Right lobe of liver (tissue), 6 donors: ENCODE measurements at regions of chr21 and their contacts with region 1.

Region 1: GRCh38 chr21:43805275-43805800 is 16.0 kb downstream of the RRP1 start:
- DNase-seq: no peak
- ATAC-seq: no peak
- H3K4me3 ChIP-seq: no peak overlapping the region
- H3K27ac ChIP-seq: no peak overlapping the region
- H3K4me1 ChIP-seq: peaks cover 0 to 12% (median 0%) of the 10 kb centered on the region in 4 donors
- H3K27me3 ChIP-seq: no peaks in the 10 kb centered on the region
- CTCF ChIP-seq: no peak
- POLR2A ChIP-seq: no peak

Region 2: DNA sequence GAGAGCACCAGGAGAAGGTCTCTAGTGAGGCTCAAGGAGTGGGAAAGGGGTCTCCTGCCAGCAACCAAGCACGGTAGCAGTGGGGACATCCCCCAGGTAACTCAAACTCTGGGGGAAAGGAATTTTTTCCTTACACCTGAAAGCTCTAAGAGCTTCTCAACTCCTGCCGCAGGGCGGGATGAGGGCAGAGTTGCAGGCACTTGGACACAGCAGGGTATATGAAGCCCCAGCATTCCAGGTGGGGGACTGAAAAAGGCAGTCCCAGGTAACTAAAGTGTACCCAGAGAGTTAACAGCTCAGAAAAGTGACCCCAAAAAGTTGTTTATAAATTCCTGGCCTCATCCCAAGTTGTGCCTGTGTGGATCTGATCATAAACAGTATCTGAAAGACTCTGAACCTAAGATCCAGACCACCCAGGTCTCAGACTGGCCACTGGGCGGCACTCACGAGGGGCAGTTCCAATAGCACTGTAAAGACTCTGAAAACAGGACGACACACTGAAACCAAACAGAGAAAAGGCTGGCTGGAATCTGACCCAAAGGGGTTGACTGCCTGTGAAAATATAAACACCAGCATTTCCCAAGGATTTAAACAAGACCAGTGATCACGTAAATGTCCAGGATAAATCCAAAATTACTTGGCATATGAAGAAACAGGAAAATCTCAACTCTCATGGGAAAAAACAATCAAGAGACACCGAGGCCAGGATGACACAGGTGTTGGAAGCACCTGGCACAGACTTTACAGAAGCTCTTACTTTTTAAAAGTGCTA is 193.6 kb before region 1 on chr21:
- intact Hi-C with region 1: no loop called
- DNase-seq: peak; percentile 67 to 77 (median 76)
- ATAC-seq: peak; percentile 85 to 93 (median 88)
- H3K4me3 ChIP-seq: no peak overlapping the region
- H3K27ac ChIP-seq: peak overlapping the region in 2 of 3 donors; percentile 17 to 56
- H3K4me1 ChIP-seq: peaks cover 0 to 36% (median 10%) of the 10 kb centered on the region in 4 donors
- H3K27me3 ChIP-seq: no peaks in the 10 kb centered on the region
- CTCF ChIP-seq: peak; percentile 69 to 83 (median 78)
- POLR2A ChIP-seq: no peak

Region 3: DNA sequence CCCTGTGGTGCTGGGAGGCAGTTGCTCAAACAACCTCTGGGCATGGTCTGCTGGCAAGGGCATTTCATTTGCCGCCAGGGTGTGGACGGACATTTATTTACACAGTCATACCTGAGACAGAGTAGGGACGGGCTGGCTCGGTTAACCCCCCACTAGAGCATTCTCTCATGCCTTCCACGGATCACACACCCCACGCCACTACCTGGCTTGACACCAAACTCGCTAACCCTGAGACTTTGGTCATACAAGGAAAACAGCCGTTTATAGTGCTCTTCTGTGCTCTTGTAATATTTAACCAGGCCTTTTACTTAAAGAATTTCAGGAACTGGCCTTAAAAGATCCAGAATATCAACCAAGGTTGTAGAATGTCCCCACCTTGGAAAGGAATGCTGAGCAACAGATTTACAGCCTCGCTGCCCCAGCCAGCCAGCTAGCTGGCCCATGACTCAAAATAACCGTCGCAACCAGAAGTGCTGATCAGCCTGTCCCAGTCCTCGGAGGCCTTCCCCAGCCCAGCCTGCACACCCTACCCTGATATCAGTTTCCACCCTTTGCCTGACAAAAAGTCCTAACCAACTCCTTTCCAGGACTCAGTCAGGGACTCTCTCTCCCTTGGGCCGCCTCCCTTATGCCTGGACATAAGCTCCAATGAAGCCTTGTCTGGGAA is 92.9 kb before region 1 on chr21:
- intact Hi-C with region 1: no loop called
- DNase-seq: no peak
- ATAC-seq: peak; percentile 53 to 73 (median 58)
- H3K4me3 ChIP-seq: no peak overlapping the region
- H3K27ac ChIP-seq: no peak overlapping the region
- H3K4me1 ChIP-seq: peaks cover 0 to 6% (median 0%) of the 10 kb centered on the region in 4 donors
- H3K27me3 ChIP-seq: no peaks in the 10 kb centered on the region
- CTCF ChIP-seq: no peak
- POLR2A ChIP-seq: no peak

Region 4: DNA sequence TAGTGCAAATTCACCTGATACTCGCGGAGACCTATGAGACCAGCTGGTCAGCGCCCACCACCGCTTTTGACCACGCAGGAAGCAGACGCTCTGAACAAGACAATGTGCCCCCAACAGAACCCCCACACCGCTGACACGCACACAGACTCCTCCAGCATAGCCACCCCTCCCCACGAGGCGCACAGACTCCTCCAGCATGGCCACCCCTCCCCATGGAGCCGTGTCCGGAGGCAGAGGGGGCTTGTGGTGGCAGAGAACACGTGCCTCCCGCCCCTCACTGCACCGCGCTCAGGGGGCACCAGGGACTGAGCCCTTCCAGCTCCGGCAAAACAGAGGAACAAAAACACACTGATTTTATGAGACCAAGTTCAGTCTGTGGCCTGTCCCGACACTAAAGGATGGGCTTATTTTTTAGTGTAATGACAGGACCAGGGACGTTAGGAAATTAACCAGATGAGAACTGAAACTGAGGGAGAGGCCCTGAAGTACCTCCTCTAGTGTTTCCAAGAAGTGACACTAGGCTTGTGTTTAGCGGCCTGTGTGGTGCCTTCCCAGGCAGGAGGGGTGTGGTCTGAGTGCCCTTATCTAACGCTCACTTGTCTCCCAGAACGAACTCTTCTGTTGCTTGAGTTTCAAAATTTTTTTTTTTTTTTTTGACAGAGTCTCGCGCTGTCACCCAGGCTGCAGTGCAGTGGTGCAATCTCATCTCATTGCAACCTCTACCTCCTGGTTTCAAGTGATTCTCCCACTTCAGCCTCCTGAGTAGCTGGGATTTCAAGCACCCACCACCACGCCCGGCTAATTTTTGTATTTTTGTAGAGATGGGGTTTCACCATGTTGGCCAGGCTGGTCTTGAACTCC is 49.7 kb after region 1 on chr21:
- intact Hi-C with region 1: no loop called
- DNase-seq: peak in 1 of 3 donors; percentile 45
- ATAC-seq: peak; percentile 57 to 84 (median 68)
- H3K4me3 ChIP-seq: no peak overlapping the region
- H3K27ac ChIP-seq: no peak overlapping the region
- H3K4me1 ChIP-seq: no peaks in the 10 kb centered on the region
- H3K27me3 ChIP-seq: no peaks in the 10 kb centered on the region
- CTCF ChIP-seq: no peak
- POLR2A ChIP-seq: no peak

Region 5: DNA sequence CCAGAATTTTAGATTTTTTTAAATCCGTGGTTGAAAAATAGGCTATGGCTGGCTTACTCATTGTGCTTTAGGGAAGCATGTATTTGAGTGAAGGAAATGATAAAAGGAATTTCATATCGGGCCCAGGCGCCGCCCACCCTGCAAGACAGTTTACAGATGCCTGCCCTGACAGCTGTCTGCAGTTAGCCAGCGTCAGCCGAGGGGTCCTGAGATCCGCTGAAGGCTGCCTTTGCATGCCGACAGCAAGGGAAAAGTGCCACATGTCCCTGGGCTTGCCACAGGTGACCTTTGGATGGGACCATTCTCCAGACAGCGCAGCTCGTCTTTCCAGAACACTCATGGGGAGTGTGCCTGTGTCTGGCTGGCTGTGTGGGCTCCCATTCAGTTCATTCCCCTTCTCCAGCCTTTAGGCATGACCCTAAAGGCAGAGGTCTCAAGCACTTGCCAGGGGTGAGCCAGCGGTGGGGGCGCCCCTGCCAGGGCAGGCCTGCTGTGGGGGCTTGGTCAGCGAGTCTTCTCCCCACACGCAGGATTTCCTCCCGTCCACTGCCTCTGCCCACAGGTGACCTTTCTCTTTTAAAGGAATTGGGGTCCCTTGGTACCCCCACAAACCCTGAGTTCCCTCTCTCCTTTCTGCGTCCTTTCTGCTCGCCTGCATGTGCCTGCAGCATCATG is 160.7 kb after region 1 on chr21:
- intact Hi-C with region 1: loop called in 1 of 2 experiments (anchors 5 kb)
- DNase-seq: no peak
- ATAC-seq: no peak
- H3K4me3 ChIP-seq: no peak overlapping the region
- H3K27ac ChIP-seq: no peak overlapping the region
- H3K4me1 ChIP-seq: peaks cover 0 to 6% (median 0%) of the 10 kb centered on the region in 4 donors
- H3K27me3 ChIP-seq: no peaks in the 10 kb centered on the region
- CTCF ChIP-seq: no peak
- POLR2A ChIP-seq: no peak

Region 6: GRCh38 chr21:43975495-43975993 is 170.2 kb after region 1 on chr21:
- intact Hi-C with region 1: loop called (anchors 5 kb)
- DNase-seq: peak; percentile 78 to 80 (median 79)
- ATAC-seq: peak; percentile 81 to 90 (median 84)
- H3K4me3 ChIP-seq: no peak overlapping the region
- H3K27ac ChIP-seq: no peak overlapping the region
- H3K4me1 ChIP-seq: peaks cover 0 to 10% (median 0%) of the 10 kb centered on the region in 4 donors
- H3K27me3 ChIP-seq: no peaks in the 10 kb centered on the region
- CTCF ChIP-seq: peak; percentile 86 to 94 (median 90)
- POLR2A ChIP-seq: no peak